ENCODE measurements at regions of chr9 and their contacts with region 1.

Region 1: GRCh38 chr9:113591001-113591898 is 127.7 kb downstream of the RGS3 start:
- DNase-seq: peak; percentile 85
- H3K4me3 Mint-ChIP-seq: no peak overlapping the region
- H3K27ac Mint-ChIP-seq: no peak overlapping the region
- H3K4me1 Mint-ChIP-seq: peaks cover 37% of the 10 kb centered on the region
- H3K27me3 Mint-ChIP-seq: no peaks in the 10 kb centered on the region

Region 2: GRCh38 chr9:113446323-113446740 is 144.9 kb before region 1 on chr9:
- CTCF ChIA-PET with region 1: interaction called, 67 read pairs
- intact Hi-C with region 1: loop called (anchors 1 kb)
- DNase-seq: peak; percentile 22
- H3K4me3 Mint-ChIP-seq: no peak overlapping the region
- H3K27ac Mint-ChIP-seq: no peak overlapping the region
- H3K4me1 Mint-ChIP-seq: no peaks in the 10 kb centered on the region
- H3K27me3 Mint-ChIP-seq: no peaks in the 10 kb centered on the region

Region 3: DNA sequence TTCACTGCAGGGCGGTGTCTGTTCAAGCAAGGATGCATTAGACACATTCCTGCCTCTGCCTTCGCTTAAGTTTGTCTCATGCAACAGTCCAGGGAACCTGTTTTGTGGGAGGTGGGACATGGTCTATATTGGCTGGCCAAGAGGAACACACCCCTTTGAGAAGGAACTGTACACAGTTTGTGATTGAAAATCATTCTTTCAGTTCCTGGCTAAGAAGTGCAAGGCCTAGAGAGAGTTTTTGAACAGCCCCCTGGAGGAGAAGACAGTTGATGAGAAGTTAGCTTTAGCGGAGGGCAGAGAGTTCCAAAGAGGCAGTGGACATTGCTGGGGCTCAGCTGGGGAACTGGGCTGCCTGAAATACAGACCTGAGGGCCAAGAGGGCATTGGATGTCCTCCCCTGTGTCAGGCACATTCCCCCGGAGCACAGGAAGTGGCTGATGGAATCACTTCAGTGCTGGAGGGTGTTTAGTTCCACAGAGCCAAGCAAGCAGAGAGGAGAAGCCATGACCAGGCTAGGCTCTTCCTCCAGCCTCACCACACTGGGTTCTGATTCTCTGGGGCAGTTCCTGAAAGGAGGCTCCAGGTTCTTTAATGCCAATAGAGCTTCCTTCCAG is 61.1 kb before region 1 on chr9:
- CTCF ChIA-PET with region 1: no interaction called
- intact Hi-C with region 1: no loop called
- DNase-seq: no peak
- H3K4me3 Mint-ChIP-seq: no peak overlapping the region
- H3K27ac Mint-ChIP-seq: no peak overlapping the region
- H3K4me1 Mint-ChIP-seq: no peaks in the 10 kb centered on the region
- H3K27me3 Mint-ChIP-seq: no peaks in the 10 kb centered on the region

Region 4: DNA sequence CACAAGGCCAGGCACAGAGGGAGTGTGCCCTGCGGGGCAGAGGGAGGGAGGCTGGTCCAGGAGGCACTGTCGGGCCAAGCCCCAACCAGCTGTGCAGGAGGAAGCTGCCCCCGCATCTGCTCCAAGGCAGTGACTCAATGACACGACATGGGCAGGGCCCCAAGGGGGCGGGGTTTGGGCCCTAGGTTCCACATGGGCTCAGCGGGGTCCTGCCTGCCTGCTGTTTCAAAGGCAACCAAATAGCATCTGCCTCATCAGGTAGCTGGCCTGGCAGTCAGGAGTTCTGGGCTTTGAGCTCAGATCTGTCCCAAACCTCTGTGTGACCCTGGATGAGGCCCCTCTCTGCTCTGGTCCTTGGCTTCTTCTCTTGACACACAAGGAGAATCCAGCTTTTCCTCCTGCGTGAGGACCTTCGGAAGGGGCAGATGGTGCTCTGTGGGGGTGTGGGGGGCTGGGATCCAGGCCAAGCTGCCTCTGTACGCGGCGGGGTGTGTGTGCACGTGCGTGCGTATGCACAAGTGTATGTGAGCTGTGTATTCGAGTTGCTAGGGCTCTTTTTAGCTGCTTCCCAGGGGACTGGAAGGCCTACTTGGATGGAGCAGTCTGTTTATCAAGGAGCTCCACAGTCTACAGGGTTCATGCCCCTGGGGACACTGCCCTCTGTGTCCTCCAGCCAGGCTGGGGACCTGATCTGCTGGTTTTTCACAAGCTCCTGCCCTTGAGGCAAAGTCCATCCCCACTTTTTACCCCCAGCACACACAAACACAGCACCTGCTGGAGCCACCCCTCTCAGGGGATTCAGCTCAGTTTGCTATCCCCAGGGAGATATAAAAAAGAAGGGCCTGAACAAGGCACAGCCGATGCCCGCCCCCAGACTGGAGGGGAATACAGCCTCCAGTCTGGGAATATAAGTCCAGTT is 11.1 kb after region 1 on chr9:
- CTCF ChIA-PET with region 1: interaction called, 11 read pairs
- intact Hi-C with region 1: loop called (anchors 1 kb)
- DNase-seq: peak; percentile 79
- H3K4me3 Mint-ChIP-seq: no peak overlapping the region
- H3K27ac Mint-ChIP-seq: no peak overlapping the region
- H3K4me1 Mint-ChIP-seq: peaks cover 4% of the 10 kb centered on the region
- H3K27me3 Mint-ChIP-seq: no peaks in the 10 kb centered on the region

Region 5: GRCh38 chr9:113650207-113651131 is 59.2 kb after region 1 on chr9:
- CTCF ChIA-PET with region 1: interaction called, 440 read pairs
- intact Hi-C with region 1: loop called (anchors 1 kb)
- DNase-seq: no peak
- H3K4me3 Mint-ChIP-seq: no peak overlapping the region
- H3K27ac Mint-ChIP-seq: no peak overlapping the region
- H3K4me1 Mint-ChIP-seq: no peaks in the 10 kb centered on the region
- H3K27me3 Mint-ChIP-seq: peaks cover 7% of the 10 kb centered on the region

Measured in activated naive CD4-positive, alpha-beta T cell treated with anti-CD3 and anti-CD28 coated beads for 36 hours (primary cell).